PC-9 (cell line): ENCODE measurements at regions of chr2 and their contacts with region 1.

Region 1: DNA sequence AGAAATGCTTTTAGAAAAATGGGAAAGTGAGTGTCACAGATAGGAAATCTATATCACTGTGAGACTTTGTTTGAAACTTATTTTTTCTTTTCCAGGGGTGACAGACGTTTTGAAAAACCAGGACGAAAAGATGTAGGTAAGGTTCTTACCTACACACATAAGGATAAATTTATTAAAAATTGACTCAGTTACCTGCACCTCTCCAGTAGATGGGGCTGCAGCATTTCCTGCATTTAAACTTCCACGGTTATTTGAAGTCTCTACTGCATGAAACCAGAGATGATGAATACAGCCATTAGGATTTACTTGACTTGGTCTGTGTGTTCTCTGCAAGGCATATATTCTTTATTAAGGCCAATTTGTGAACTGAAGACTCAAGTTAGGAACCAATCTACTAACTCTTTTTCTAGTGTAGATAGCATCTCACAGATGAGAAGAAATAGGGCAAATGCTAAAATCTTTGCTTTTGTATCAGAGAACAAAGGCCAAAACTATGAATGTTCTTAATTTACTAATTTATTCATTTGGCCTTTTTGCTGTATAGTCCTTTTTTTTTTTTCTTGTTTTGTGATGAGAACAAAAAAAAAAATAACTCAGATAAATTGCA is 15.0 kb downstream of the KCNJ13 start:
- DNase-seq: peak; percentile 47 to 71
- H3K4me3 ChIP-seq: no peak overlapping the region
- H3K27ac ChIP-seq: no peak overlapping the region
- H3K4me1 ChIP-seq: no peaks in the 10 kb centered on the region
- H3K27me3 ChIP-seq: no peaks in the 10 kb centered on the region
- CTCF ChIP-seq: peak; percentile 85

Region 2: GRCh38 chr2:232683368-232683767 is 78.0 kb before region 1 on chr2:
- CTCF ChIA-PET with region 1: interaction called, 14 read pairs
- POLR2A ChIA-PET with region 1: no interaction called
- intact Hi-C with region 1: no loop called
- DNase-seq: peak in 1 of 2 experiments; percentile 20
- H3K4me3 ChIP-seq: no peak overlapping the region
- H3K27ac ChIP-seq: no peak overlapping the region
- H3K4me1 ChIP-seq: no peaks in the 10 kb centered on the region
- H3K27me3 ChIP-seq: peaks cover 45% of the 10 kb centered on the region
- CTCF ChIP-seq: no peak

Region 3: DNA sequence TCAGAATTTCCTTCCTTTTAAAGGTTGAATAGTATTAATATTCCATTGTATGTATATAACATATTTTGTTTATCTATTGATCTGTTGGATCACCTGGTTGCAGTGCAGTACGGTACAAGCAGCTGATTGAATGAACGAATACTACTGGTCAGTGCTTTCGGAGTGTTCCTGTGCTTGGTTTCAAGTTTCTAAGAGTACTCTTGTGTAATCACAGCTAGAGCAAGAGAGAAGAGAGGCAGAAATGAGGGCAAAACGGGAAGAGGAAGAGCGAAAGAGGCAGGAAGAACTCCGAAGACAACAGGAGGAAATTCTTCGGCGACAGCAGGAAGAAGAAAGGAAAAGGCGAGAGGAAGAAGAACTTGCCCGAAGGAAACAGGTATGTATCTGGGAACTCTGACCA is 55.3 kb after region 1 on chr2:
- CTCF ChIA-PET with region 1: no interaction called
- POLR2A ChIA-PET with region 1: no interaction called
- intact Hi-C with region 1: loop called (anchors 5 kb)
- DNase-seq: no peak
- H3K4me3 ChIP-seq: no peak overlapping the region
- H3K27ac ChIP-seq: no peak overlapping the region
- H3K4me1 ChIP-seq: 0 out of 2 replicates have a peak, but pooled peaks cover 1% of the 10 kb centered on the region
- H3K27me3 ChIP-seq: no peaks in the 10 kb centered on the region
- CTCF ChIP-seq: no peak

Region 4: DNA sequence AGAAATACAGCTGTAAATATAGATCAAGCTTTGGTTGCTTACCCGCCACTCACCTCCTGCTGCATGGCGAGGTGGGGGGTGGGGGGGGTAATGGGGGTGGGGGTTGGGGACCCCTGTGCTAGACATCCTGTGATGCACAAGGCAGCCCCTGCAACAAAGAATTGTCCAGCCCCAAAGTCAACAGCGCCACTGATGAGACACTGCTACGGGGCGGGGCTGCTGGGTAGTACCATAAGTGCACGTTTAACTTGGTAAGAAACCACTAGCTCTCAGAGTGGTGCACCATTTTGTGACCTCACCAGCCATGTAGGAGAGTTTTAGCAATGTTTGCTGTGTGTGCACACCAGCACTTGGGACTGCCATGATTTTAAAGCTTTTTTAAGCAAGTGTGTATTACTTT is 149.0 kb after region 1 on chr2:
- CTCF ChIA-PET with region 1: no interaction called
- POLR2A ChIA-PET with region 1: no interaction called
- intact Hi-C with region 1: no loop called
- DNase-seq: no peak
- H3K4me3 ChIP-seq: no peak overlapping the region
- H3K27ac ChIP-seq: no peak overlapping the region
- H3K4me1 ChIP-seq: no peaks in the 10 kb centered on the region
- H3K27me3 ChIP-seq: no peaks in the 10 kb centered on the region
- CTCF ChIP-seq: no peak

Region 5: GRCh38 chr2:233053928-233054784 is 292.8 kb after region 1 on chr2:
- CTCF ChIA-PET with region 1: no interaction called
- POLR2A ChIA-PET with region 1: no interaction called
- intact Hi-C with region 1: no loop called
- DNase-seq: peak in 1 of 2 experiments; percentile 64
- H3K4me3 ChIP-seq: no peak overlapping the region
- H3K27ac ChIP-seq: no peak overlapping the region
- H3K4me1 ChIP-seq: peaks cover 32% of the 10 kb centered on the region
- H3K27me3 ChIP-seq: no peaks in the 10 kb centered on the region
- CTCF ChIP-seq: peak; percentile 97